IMR-90 (cell line): ENCODE measurements at regions of chr16 and their contacts with region 1.

Region 1: GRCh38 chr16:52618753-52619497 is 72.0 kb upstream of the TOX3 start:
- DNase-seq: no peak
- ATAC-seq: no peak
- H3K4me3 ChIP-seq: no peak overlapping the region
- H3K27ac ChIP-seq: no peak overlapping the region
- H3K4me1 ChIP-seq: no peaks in the 10 kb centered on the region
- H3K27me3 ChIP-seq: no peaks in the 10 kb centered on the region
- CTCF ChIP-seq: no peak
- POLR2A ChIP-seq: no peak
- RAD21 ChIP-seq: no peak

Region 2: GRCh38 chr16:52597580-52598483 is 21.1 kb before region 1 on chr16:
- CTCF ChIA-PET with region 1: no interaction called
- POLR2A ChIA-PET with region 1: no interaction called
- dilution Hi-C with region 1: no loop called
- in situ Hi-C with region 1: no loop called
- intact Hi-C with region 1: loop called (anchors 2 kb)
- DNase-seq: no peak
- ATAC-seq: no peak
- H3K4me3 ChIP-seq: no peak overlapping the region
- H3K27ac ChIP-seq: no peak overlapping the region
- H3K4me1 ChIP-seq: no peaks in the 10 kb centered on the region
- H3K27me3 ChIP-seq: no peaks in the 10 kb centered on the region
- CTCF ChIP-seq: no peak
- POLR2A ChIP-seq: no peak
- RAD21 ChIP-seq: no peak